Activated B cell treated with CpG ODN at 0.5 μM for 24 hours (primary cell): ENCODE measurements at regions of chr11 and their contacts with region 1.

Region 1: GRCh38 chr11:30917859-30918478 is 331.8 kb upstream of the MPPED2 start:
- DNase-seq: no peak
- ATAC-seq: no peak
- H3K4me3 Mint-ChIP-seq: no peak overlapping the region
- H3K27ac Mint-ChIP-seq: no peak overlapping the region
- H3K4me1 Mint-ChIP-seq: no peaks in the 10 kb centered on the region
- H3K27me3 Mint-ChIP-seq: peaks cover 4% of the 10 kb centered on the region
- CTCF ChIP-seq: no peak

Region 2: GRCh38 chr11:29343465-29344333 is 1574.3 kb before region 1 on chr11:
- CTCF ChIA-PET with region 1: no interaction called
- POLR2A ChIA-PET with region 1: no interaction called
- intact Hi-C with region 1: loop called (anchors 2 kb)
- DNase-seq: peak; percentile 14
- ATAC-seq: peak; percentile 40
- H3K4me3 Mint-ChIP-seq: no peak overlapping the region
- H3K27ac Mint-ChIP-seq: no peak overlapping the region
- H3K4me1 Mint-ChIP-seq: no peaks in the 10 kb centered on the region
- H3K27me3 Mint-ChIP-seq: no peaks in the 10 kb centered on the region
- CTCF ChIP-seq: peak; percentile 37

Region 3: DNA sequence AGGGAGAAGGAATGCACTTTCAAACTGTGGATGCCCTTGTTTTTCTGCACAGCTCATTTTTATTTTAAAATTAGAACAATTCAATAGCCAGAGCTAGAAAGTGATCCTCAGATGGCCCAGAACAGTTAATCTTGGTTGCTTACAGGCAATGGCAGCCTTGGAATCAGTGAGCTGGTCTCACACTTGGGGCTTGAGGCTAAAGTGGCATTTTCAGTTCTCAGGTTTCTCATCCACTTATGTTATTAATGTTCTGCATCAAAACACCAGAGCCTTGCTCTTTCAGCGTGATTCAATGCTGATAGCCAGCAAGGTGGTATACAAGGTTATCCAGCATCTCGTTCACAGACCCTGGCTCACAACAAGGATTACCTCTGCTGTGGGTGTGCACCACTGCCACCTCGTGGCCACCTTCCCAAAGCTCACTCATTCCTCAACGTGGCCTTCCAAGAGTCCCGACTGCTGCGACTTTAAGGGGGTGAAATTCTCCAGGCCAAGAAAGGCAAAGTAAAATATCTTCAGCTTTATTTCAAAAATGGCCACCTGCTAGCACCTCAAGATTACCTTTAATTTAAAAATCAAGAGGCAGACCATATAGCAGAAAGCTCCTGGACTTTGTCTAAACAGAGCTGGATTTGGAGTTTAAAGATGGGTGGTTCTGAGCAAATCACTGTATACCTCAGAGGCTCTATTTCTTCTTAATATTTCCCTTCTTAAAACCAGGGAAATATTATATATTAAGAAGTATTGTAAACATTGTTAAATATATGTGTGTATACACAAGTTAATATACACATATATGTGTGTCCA is 721.4 kb before region 1 on chr11:
- CTCF ChIA-PET with region 1: no interaction called
- POLR2A ChIA-PET with region 1: no interaction called
- intact Hi-C with region 1: loop called (anchors 5 kb)
- DNase-seq: peak; percentile 20
- ATAC-seq: peak; percentile 28
- H3K4me3 Mint-ChIP-seq: no peak overlapping the region
- H3K27ac Mint-ChIP-seq: no peak overlapping the region
- H3K4me1 Mint-ChIP-seq: no peaks in the 10 kb centered on the region
- H3K27me3 Mint-ChIP-seq: peaks cover 2% of the 10 kb centered on the region
- CTCF ChIP-seq: peak; percentile 24

Region 4: DNA sequence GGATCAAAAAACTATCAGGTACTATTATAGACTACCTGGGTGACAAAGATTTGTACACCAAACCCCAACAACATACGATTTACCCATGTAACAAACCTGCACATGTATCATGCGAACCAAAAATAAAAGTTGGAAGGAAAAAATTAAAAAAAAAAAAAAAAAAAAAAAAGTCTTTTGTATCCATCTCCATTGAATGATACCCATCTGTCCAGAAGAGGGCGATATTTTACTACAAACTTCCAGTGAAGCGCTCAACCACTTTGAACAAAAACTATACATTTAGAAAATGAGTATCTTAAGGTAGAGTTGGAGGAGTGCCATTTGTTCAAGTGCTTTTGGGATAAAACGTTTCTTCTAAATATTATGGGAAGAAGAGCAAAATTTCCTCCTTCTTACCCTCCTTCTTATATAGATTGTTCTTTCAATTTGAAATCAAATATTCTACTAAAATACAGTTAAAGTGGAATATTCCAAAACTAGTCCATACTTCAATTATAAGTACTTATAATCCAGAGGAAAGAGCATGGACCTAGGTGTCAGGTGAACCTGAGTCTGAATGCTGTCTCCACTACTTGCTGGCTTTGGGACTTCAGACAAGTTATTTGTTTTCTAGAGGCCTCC is 571.8 kb before region 1 on chr11:
- CTCF ChIA-PET with region 1: interaction called, 5 read pairs
- POLR2A ChIA-PET with region 1: no interaction called
- intact Hi-C with region 1: loop called (anchors 1 kb)
- DNase-seq: no peak
- ATAC-seq: no peak
- H3K4me3 Mint-ChIP-seq: no peak overlapping the region
- H3K27ac Mint-ChIP-seq: no peak overlapping the region
- H3K4me1 Mint-ChIP-seq: peaks cover 38% of the 10 kb centered on the region
- H3K27me3 Mint-ChIP-seq: no peaks in the 10 kb centered on the region
- CTCF ChIP-seq: peak; percentile 50

Region 5: GRCh38 chr11:30893318-30893717 is 24.7 kb before region 1 on chr11:
- CTCF ChIA-PET with region 1: no interaction called
- POLR2A ChIA-PET with region 1: no interaction called
- intact Hi-C with region 1: no loop called
- DNase-seq: no peak
- ATAC-seq: no peak
- H3K4me3 Mint-ChIP-seq: no peak overlapping the region
- H3K27ac Mint-ChIP-seq: no peak overlapping the region
- H3K4me1 Mint-ChIP-seq: no peaks in the 10 kb centered on the region
- H3K27me3 Mint-ChIP-seq: no peaks in the 10 kb centered on the region
- CTCF ChIP-seq: no peak

Region 6: GRCh38 chr11:31045335-31045734 is 127.4 kb after region 1 on chr11:
- CTCF ChIA-PET with region 1: no interaction called
- POLR2A ChIA-PET with region 1: no interaction called
- intact Hi-C with region 1: no loop called
- DNase-seq: no peak
- ATAC-seq: no peak
- H3K4me3 Mint-ChIP-seq: no peak overlapping the region
- H3K27ac Mint-ChIP-seq: no peak overlapping the region
- H3K4me1 Mint-ChIP-seq: no peaks in the 10 kb centered on the region
- H3K27me3 Mint-ChIP-seq: no peaks in the 10 kb centered on the region
- CTCF ChIP-seq: no peak